AG04449 (cell line): ENCODE measurements at regions of chr7 and their contacts with region 1.

Region 1: GRCh38 chr7:121081327-121081936 is 92.9 kb downstream of the CPED1 start:
- DNase-seq: peak; percentile 31
- H3K4me3 ChIP-seq: no peak overlapping the region
- CTCF ChIP-seq: peak; percentile 49

Region 2: GRCh38 chr7:121006711-121007315 is 74.6 kb before region 1 on chr7:
- CTCF ChIA-PET with region 1: interaction called, 17 read pairs
- POLR2A ChIA-PET with region 1: no interaction called
- DNase-seq: no peak
- H3K4me3 ChIP-seq: no peak overlapping the region
- CTCF ChIP-seq: no peak

Region 3: DNA sequence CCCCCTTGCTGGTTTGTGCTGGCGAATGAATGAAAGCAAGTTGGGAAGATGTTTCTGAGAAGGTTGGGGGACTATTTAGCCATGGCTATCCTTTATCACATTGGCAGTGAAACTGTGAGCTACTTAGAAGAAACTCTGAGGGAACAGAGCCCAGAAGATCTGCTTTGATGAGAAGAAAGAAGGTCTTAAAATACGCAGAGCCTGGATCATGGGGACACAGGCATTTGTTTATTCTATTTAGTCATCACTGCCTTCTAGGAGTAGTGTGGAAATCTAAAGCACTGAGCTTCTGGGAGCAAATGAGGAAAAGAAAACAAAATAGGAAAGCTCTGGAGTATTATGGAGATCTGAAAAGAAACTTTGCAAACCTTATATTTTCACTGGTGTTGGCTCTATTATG is 64.5 kb before region 1 on chr7:
- CTCF ChIA-PET with region 1: interaction called, 20 read pairs
- POLR2A ChIA-PET with region 1: no interaction called
- DNase-seq: peak; percentile 62
- H3K4me3 ChIP-seq: no peak overlapping the region
- CTCF ChIP-seq: no peak

Region 4: DNA sequence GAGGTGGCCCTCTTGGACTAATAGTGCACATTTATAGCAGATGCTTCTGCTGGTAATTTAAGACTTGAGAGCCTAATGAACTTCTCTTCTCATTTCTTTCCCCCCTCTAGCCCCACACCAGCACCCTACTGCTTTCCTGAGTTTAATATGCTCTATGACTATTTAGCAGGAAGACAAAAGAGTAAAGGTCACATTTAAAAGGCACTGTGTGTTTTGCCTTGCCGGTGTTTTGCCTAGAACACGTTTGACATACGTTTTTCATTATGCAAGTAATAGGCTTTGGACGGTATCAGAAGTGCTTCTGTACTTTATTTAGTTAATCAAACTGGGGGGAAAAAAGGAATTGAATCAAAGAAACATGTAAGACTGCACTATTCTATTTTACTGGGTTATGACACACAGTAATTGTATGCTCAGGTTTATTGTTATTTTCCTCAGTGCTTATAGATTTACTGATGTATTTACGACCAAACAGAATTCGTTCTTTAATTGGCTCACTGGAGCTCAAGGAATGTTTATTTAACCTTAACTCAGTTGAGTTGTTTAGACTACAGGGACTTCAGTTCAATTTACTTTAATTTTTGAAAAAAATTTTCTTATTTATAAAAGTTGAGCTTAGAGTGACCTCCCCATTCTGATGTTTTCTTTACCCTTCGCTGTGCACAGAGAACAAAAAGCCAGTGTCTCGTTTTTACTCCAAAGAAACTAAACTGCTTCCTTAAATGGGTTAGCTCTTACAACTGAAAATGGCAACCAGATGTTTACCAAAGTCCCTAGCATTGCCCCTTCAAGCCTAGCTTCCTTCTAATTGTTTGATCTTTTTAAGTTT is 57.5 kb before region 1 on chr7:
- CTCF ChIA-PET with region 1: interaction called, 10 read pairs
- POLR2A ChIA-PET with region 1: no interaction called
- DNase-seq: no peak
- H3K4me3 ChIP-seq: no peak overlapping the region
- CTCF ChIP-seq: no peak

Region 5: DNA sequence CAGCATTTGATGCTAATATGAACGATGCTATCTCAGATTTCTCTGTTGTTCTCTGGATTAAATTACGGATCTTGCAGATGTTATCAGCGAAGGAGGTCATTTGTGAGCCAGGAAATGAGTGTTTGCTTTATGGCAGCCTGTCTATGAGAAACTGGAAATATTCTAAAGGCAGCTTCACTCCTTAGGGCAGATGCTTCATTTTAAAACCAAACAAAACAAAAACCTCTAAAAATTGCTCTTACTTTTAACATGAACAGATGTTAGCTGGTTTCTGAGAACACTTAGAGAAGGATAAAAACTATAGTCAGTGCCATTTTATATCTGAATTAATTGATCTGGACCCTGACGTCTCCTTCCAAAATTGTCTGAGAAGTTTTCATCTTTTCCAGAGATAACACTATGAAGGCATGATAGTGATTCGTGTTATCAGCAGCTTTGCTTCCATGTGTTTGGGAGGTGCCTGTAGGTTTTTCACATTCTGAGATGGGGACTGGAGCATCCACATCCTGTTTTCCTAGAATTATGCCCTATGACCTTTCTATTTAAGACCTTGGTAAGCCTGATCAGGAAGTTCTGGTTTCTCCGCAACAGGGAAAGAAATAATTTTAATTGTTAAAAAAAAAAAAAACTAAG is 39.8 kb before region 1 on chr7:
- CTCF ChIA-PET with region 1: interaction called, 10 read pairs
- POLR2A ChIA-PET with region 1: interaction called, 3 read pairs
- DNase-seq: no peak
- H3K4me3 ChIP-seq: no peak overlapping the region
- CTCF ChIP-seq: no peak

Region 6: DNA sequence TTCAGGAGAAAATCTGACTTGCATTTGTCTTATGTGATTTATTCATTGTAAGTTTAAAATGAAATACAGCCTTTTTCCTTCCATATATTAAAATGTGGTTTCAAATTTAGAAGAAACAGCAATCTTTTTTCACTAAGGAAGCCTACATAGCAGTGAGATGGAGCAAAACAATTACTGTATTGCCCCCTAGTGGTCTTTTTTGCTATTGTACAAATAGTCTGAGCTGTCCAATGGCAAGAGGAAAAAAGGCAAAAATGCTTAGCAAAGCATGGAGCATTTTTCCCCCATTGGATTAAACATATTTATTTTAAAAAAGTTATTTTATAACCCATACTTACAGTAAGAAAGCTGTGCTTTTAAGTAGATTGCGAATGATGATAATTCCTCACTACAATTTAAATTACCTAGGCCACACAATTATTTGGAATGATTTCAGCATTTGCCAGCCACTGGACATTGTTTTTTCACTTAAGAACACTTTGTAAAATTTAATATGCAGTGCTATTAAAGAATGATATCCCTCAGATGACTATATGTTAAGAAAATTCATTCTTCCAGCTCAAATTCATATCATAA is 26.6 kb after region 1 on chr7:
- CTCF ChIA-PET with region 1: interaction called, 21 read pairs
- POLR2A ChIA-PET with region 1: no interaction called
- DNase-seq: peak; percentile 19
- H3K4me3 ChIP-seq: no peak overlapping the region
- CTCF ChIP-seq: peak; percentile 43